ENCODE measurements at regions of chr6 and their contacts with region 1.

Region 1: DNA sequence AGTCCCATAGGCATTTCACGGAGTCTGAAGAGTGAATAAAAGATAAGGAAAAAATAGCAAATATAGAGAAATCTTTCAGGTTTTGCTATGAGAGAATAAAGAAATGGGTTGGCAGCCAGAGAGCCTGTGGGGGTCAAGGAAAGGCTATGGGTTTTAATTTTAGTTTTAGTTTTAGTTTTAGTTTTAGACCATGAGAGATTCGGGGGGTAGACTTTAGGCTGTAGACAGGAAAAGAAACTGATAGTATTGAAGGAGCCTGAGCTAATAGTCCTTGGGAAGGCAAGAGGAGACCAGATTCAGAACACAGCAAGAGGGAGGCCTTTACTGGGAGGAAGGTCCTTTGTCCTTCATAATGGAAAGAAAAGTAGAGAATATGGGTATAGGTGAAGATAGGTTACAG is 19.3 kb downstream of the DOP1A start:
- DNase-seq: no peak
- H3K4me3 ChIP-seq: no peak overlapping the region
- H3K27ac ChIP-seq: no peak overlapping the region
- H3K4me1 ChIP-seq: no peaks in the 10 kb centered on the region
- H3K27me3 ChIP-seq: no peaks in the 10 kb centered on the region
- CTCF ChIP-seq: no peak
- POLR2A ChIP-seq: no peak

Region 2: DNA sequence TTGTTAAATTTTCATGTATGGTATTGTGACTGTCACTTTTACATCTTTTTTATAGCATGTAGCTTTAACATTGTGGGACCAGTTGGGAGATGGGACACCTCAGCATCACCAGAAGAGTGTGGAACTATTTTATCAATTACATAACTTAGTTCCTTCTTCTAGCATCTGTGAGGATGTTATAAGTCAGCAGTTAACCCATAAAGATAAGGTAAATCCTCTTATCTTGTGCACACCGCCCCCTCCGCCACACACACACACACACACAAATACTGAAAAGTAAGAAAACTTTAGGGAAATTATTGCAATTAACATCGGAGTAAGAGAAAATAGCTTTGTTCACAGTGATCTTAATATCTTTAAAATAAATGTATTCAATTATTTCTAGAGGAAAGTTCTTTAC is 45.4 kb after region 1 on chr6:
- intact Hi-C with region 1: loop called (anchors 10 kb)
- DNase-seq: no peak
- H3K4me3 ChIP-seq: no peak overlapping the region
- H3K27ac ChIP-seq: no peak overlapping the region
- H3K4me1 ChIP-seq: no peaks in the 10 kb centered on the region
- H3K27me3 ChIP-seq: no peaks in the 10 kb centered on the region
- CTCF ChIP-seq: no peak
- POLR2A ChIP-seq: no peak